Activated B cell treated with CpG ODN at 0.5 μM for 24 hours (primary cell): ENCODE measurements at regions of chr5 and their contacts with region 1.

Region 1: GRCh38 chr5:36690041-36690961 is 83.9 kb downstream of the SLC1A3 start:
- DNase-seq: peak; percentile 69
- ATAC-seq: peak; percentile 80
- H3K4me3 Mint-ChIP-seq: peak overlapping the region; percentile 94
- H3K27ac Mint-ChIP-seq: peak overlapping the region; percentile 86
- H3K4me1 Mint-ChIP-seq: peaks cover 39% of the 10 kb centered on the region
- H3K27me3 Mint-ChIP-seq: no peaks in the 10 kb centered on the region
- CTCF ChIP-seq: no peak

Region 2: GRCh38 chr5:36073595-36074216 is 616.6 kb before region 1 on chr5:
- CTCF ChIA-PET with region 1: interaction called, 13 read pairs
- POLR2A ChIA-PET with region 1: no interaction called
- intact Hi-C with region 1: loop called (anchors 1 kb)
- DNase-seq: no peak
- ATAC-seq: peak; percentile 47
- H3K4me3 Mint-ChIP-seq: no peak overlapping the region
- H3K27ac Mint-ChIP-seq: no peak overlapping the region
- H3K4me1 Mint-ChIP-seq: no peaks in the 10 kb centered on the region
- H3K27me3 Mint-ChIP-seq: peaks cover 7% of the 10 kb centered on the region
- CTCF ChIP-seq: no peak

Region 3: GRCh38 chr5:36177715-36178523 is 512.4 kb before region 1 on chr5:
- CTCF ChIA-PET with region 1: interaction called, 7 read pairs
- POLR2A ChIA-PET with region 1: no interaction called
- intact Hi-C with region 1: loop called (anchors 1 kb)
- DNase-seq: no peak
- ATAC-seq: no peak
- H3K4me3 Mint-ChIP-seq: no peak overlapping the region
- H3K27ac Mint-ChIP-seq: no peak overlapping the region
- H3K4me1 Mint-ChIP-seq: peaks cover 4% of the 10 kb centered on the region
- H3K27me3 Mint-ChIP-seq: no peaks in the 10 kb centered on the region
- CTCF ChIP-seq: no peak

Region 4: DNA sequence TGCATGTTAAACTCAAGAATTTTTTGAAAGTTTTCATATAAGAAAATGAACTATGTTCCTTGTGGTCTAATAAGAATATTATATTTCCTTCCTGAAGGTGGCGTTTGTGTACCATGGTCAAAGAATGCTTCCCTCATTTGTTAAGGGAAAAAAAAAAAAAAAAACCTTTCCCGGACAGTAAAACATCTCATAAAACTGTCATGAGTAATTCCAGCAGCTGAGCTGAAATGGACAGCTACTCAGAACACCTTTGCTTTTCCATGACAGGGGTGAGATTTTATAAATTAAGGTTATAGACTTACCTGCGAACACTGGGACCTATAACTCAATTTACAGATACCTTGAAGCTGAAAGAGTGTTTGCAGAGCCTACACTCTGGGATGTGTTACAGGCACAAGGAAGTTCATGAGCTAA is 275.4 kb before region 1 on chr5:
- CTCF ChIA-PET with region 1: interaction called, 6 read pairs
- POLR2A ChIA-PET with region 1: no interaction called
- intact Hi-C with region 1: loop called (anchors 1 kb)
- DNase-seq: no peak
- ATAC-seq: no peak
- H3K4me3 Mint-ChIP-seq: no peak overlapping the region
- H3K27ac Mint-ChIP-seq: no peak overlapping the region
- H3K4me1 Mint-ChIP-seq: peaks cover 3% of the 10 kb centered on the region
- H3K27me3 Mint-ChIP-seq: peaks cover 4% of the 10 kb centered on the region
- CTCF ChIP-seq: no peak

Region 5: GRCh38 chr5:36494756-36495601 is 195.3 kb before region 1 on chr5:
- CTCF ChIA-PET with region 1: no interaction called
- POLR2A ChIA-PET with region 1: no interaction called
- intact Hi-C with region 1: no loop called
- DNase-seq: no peak
- ATAC-seq: no peak
- H3K4me3 Mint-ChIP-seq: no peak overlapping the region
- H3K27ac Mint-ChIP-seq: no peak overlapping the region
- H3K4me1 Mint-ChIP-seq: no peaks in the 10 kb centered on the region
- H3K27me3 Mint-ChIP-seq: peaks cover 4% of the 10 kb centered on the region
- CTCF ChIP-seq: no peak

Region 6: GRCh38 chr5:36680066-36680465 is 10.2 kb before region 1 on chr5:
- CTCF ChIA-PET with region 1: interaction called, 3 read pairs
- POLR2A ChIA-PET with region 1: no interaction called
- intact Hi-C with region 1: loop called (anchors 1 kb)
- DNase-seq: no peak
- ATAC-seq: no peak
- H3K4me3 Mint-ChIP-seq: no peak overlapping the region
- H3K27ac Mint-ChIP-seq: no peak overlapping the region
- H3K4me1 Mint-ChIP-seq: no peaks in the 10 kb centered on the region
- H3K27me3 Mint-ChIP-seq: no peaks in the 10 kb centered on the region
- CTCF ChIP-seq: no peak

Region 7: DNA sequence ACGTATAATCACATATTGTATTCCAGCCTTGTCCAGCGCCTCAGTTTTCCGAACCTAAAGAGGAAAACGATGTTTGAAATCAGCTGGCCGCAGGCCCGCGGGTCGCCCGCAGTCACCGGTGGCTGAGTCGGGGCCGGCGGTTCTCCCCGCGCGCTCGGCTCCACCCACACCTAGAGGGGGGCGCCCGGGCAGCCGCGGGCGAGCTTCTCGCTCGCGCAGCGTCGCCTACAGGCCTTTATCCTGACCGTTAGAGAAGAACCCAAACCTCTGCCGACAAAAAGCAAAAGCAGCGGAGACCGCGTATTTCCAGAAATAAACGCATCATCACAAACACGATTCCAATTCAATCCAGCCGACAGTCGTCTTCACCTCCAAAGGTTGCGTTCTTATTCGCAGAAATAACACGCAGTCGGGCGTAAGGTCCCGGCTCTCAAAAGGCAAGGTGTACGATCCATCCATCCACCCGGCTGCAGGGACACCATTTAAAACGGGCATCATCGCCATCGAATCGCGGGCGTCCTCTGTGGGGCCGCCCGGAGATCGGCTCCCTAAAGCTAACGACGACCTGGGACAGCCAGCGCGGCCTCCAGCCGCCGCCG is 185.6 kb after region 1 on chr5:
- CTCF ChIA-PET with region 1: interaction called, 7 read pairs
- POLR2A ChIA-PET with region 1: interaction called, 4 read pairs
- intact Hi-C with region 1: loop called (anchors 10 kb)
- DNase-seq: peak; percentile 75
- ATAC-seq: peak; percentile 69
- H3K4me3 Mint-ChIP-seq: peak overlapping the region; percentile 93
- H3K27ac Mint-ChIP-seq: peak overlapping the region; percentile 93
- H3K4me1 Mint-ChIP-seq: peaks cover 46% of the 10 kb centered on the region
- H3K27me3 Mint-ChIP-seq: no peaks in the 10 kb centered on the region
- CTCF ChIP-seq: no peak